ENCODE measurements at regions of chr1 and their contacts with region 1.

Region 1: GRCh38 chr1:111592389-111593361 is 26.9 kb upstream of the RAP1A start:
- DNase-seq: peak; percentile 91
- ATAC-seq: peak; percentile 95

Region 2: GRCh38 chr1:111507411-111508201 is 85.1 kb before region 1 on chr1:
- intact Hi-C with region 1: loop called (anchors 2 kb)
- DNase-seq: peak; percentile 91
- ATAC-seq: peak; percentile 73

Region 3: GRCh38 chr1:111516005-111516535 is 76.6 kb before region 1 on chr1:
- intact Hi-C with region 1: loop called (anchors 1 kb)
- DNase-seq: peak; percentile 81
- ATAC-seq: peak; percentile 71

Region 4: DNA sequence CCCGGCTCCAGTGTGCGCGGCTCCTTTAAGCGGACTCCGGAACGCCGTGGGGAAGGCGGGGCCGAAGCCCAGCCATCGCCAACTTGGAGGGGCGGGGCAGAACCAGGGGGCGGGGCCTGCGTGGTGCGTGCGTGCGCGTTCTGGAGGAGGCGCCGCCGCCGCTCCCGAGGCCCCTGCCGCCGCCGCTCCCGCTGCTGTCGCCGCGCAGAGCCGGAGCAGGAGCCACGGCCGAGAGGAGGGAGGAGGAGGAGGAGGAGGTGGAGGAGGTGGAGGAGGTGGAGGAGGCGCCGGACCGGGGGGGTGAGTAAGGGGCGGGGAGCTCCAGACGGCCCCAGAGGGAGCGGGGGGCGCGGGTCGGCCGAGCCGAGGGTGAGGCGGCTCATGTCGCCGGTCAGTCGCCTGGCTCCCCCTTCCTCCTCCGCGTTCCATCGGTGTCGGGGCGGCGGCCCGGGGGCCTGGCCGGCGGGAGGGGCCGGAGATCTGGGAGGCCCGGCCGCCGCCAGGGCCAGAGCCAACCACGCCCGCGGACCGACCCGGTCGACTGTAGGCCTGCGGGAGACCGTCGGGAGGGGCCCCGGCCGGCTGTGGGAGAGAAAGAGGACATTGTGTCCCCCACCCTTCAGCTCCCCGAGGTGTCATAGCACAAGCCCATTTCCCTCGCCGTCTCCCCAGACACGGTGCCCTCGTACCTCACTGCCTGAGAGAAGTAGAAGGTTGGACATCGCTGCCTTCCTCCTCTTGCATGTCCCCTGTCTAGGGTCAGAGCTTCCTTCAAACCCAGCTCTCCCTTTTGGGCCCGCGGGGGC is 27.2 kb after region 1 on chr1 and contains the start of gene RAP1A:
- intact Hi-C with region 1: loop called (anchors 1 kb)
- DNase-seq: peak; percentile 96
- ATAC-seq: peak; percentile 97
- total RNA-seq, gene RAP1A: 107 TPM

Measured in Right ventricle myocardium inferior (tissue), 1 donor.